ENCODE measurements at regions of chr18 and their contacts with region 1.

Region 1: GRCh38 chr18:3151399-3152264 is 68.1 kb downstream of the MYOM1 start:
- DNase-seq: no peak
- H3K4me3 Mint-ChIP-seq: no peak overlapping the region
- H3K27ac Mint-ChIP-seq: no peak overlapping the region
- H3K4me1 Mint-ChIP-seq: peaks cover 6% of the 10 kb centered on the region
- H3K27me3 Mint-ChIP-seq: no peaks in the 10 kb centered on the region

Region 2: GRCh38 chr18:2932247-2933181 is 219.1 kb before region 1 on chr18:
- CTCF ChIA-PET with region 1: interaction called, 21 read pairs
- POLR2A ChIA-PET with region 1: no interaction called
- intact Hi-C with region 1: loop called (anchors 1 kb)
- DNase-seq: no peak
- H3K4me3 Mint-ChIP-seq: peak overlapping the region; percentile 18
- H3K27ac Mint-ChIP-seq: peak overlapping the region; percentile 89
- H3K4me1 Mint-ChIP-seq: peaks cover 45% of the 10 kb centered on the region
- H3K27me3 Mint-ChIP-seq: no peaks in the 10 kb centered on the region

Region 3: DNA sequence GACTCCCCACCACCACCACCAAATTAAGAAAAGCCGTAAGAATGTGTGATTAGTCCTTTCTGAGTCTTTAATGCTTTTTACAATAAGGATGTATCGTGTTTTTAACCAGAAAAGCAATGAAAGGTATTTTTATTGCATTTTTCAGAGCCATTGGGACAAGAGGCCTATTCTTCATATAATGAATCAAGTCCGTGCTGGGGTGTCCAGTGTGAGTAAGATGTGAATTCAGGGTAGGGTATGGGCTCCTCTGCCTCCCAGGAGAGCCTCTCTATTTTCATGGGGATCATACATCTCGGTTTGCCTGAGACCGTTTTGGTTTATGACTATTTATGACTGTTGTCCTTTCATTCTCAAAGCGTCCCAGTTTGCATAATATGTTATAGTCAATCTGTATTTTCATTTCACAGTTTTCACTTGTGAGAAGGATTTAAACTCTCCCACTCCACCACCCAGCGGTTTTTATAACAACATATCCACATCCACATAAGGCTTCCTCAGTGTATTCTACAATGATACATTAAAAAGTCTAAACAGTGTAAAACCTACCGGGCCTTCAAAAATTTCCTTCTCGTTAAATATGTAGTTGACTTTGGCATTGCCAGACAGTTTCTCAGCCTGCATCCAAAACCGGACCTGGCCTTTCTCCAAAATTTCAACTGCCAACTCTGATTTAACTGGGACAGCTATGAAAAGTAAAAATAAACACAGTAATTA is 57.9 kb before region 1 on chr18:
- CTCF ChIA-PET with region 1: interaction called, 7 read pairs
- POLR2A ChIA-PET with region 1: no interaction called
- intact Hi-C with region 1: loop called (anchors 10 kb)
- DNase-seq: no peak
- H3K4me3 Mint-ChIP-seq: no peak overlapping the region
- H3K27ac Mint-ChIP-seq: no peak overlapping the region
- H3K4me1 Mint-ChIP-seq: peaks cover 13% of the 10 kb centered on the region
- H3K27me3 Mint-ChIP-seq: no peaks in the 10 kb centered on the region

Region 4: DNA sequence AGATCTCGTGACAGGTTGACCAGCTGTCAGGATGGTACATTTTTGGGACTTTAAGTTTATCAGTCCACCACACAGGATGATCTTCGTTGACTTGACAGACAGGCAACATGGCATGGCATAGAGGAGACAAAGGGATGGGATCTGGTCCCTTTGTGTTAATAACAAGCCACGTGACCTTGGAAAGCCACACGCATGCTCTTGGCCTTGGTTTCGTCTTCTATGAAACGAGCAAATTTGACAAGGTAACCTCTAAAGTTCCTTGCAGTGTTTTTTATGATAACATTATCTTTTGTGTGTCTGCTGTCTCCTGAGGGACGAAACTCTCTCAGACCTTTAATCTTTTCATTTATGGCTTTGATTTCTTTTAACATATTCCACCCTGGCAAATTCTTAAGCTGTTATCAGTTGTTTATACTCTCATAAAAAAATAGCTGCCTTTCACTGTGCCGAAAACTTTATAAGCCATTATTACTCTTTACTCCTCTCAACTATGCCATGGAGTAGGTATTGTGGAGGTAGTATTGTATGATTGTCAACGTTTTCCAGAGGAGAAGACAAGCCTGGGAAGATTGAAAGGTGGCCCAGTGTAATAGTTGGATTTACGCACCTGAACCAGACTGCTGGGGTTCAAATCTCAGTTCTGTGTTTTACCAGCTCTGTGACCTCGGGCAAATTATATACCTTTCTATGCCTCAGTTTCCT is 13.2 kb before region 1 on chr18:
- CTCF ChIA-PET with region 1: interaction called, 10 read pairs
- POLR2A ChIA-PET with region 1: no interaction called
- intact Hi-C with region 1: no loop called
- DNase-seq: no peak
- H3K4me3 Mint-ChIP-seq: no peak overlapping the region
- H3K27ac Mint-ChIP-seq: no peak overlapping the region
- H3K4me1 Mint-ChIP-seq: no peaks in the 10 kb centered on the region
- H3K27me3 Mint-ChIP-seq: no peaks in the 10 kb centered on the region

Measured in activated CD4-positive, alpha-beta memory T cell treated with anti-CD3 and anti-CD28 coated beads for 36 hours (primary cell).